Activated naive CD4-positive, alpha-beta T cell treated with anti-CD3 and anti-CD28 coated beads for 36 hours (primary cell): ENCODE measurements at regions of chr10 and their contacts with region 1.

Region 1: DNA sequence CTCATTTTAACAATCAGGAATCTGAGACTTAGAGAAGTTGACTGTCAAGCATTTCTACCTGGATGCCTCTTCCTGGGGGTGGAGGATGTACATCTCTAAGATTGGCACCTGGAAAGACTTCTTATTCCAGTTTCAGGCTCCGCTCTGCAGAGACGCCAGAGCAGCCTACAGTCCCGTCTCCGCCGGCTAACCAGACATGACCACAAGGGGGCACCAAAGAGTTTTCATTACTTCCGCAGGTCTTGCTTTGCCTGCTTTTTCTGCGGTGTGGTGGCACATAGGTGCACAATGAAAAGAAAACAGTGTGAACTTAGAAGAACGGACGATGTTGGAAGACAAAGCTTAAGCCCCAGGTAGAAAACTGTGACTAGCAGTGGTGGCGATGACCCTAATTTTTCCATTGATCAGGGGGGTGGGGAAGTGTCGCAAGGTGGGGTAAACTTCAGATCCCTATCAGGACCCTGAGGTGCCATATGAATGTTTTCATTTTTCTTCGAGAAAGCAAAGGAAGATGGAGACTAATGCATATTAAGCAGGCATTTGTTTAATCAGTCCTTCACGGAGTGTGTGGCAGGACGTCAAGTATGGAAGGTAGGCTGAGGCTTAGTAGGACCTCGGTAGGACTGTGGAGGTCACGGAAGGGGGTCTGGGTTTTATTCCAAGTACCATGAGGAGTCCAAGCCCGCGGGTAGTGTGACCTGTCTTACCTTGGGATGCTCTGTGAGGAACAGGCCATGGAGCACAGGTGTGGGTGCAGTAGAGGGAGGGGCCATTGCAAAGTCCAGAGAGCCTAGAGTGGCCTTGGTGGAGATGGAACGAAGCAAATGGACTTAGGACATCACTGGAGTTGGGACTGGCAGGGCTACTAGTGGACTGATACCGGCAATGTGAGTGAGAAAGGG is 60.1 kb upstream of the SORCS3 start:
- DNase-seq: peak; percentile 84
- H3K4me3 Mint-ChIP-seq: no peak overlapping the region
- H3K27ac Mint-ChIP-seq: no peak overlapping the region
- H3K4me1 Mint-ChIP-seq: peaks cover 9% of the 10 kb centered on the region
- H3K27me3 Mint-ChIP-seq: peaks cover 13% of the 10 kb centered on the region

Region 2: DNA sequence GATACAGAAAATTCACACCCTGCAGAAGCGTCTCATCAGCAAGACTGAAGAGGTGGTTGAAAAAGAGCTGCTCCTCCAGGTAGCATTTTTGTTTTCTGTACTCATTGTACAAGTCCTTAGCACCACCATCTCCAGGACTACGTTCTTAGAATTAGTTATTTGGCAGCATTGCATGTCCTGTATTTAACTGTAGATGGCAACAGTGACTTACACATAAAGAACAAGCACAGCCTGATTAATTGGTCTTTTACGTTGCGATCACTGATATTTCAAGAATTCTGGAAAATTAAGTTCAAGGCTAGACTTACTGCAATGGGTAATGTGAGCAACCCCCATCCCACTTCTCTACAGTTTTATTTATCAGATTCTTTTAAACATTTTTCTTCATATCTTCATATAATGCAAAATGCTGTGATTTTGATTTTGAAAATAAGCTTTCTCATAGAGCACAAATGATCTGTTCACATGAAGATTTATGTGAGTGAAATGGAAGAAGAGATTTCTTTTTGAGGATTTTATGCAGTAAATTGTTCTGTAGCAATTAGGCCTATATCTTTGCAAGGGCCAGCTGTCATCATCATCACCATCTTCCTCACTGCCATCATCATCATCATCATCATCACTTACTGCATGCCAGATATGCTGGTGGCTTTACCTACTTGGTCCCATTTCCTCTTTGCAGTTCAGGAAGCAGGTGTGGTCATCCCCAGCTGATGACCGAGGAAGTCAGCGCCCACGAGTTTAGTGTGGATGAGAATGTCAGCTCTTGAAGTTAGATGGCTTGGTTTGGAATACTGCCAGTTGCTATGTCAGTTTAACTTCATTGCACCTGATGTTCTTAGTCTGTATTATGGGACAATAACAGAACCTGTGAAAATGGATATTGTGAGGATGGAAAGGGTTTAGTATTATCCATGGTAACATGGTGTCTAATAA is 174.0 kb before region 1 on chr10:
- CTCF ChIA-PET with region 1: interaction called, 3 read pairs
- intact Hi-C with region 1: loop called (anchors 5 kb)
- DNase-seq: no peak
- H3K4me3 Mint-ChIP-seq: no peak overlapping the region
- H3K27ac Mint-ChIP-seq: no peak overlapping the region
- H3K4me1 Mint-ChIP-seq: peaks cover 2% of the 10 kb centered on the region
- H3K27me3 Mint-ChIP-seq: peaks cover 12% of the 10 kb centered on the region

Region 3: GRCh38 chr10:104614245-104614831 is 33.3 kb after region 1 on chr10:
- CTCF ChIA-PET with region 1: interaction called, 12 read pairs
- intact Hi-C with region 1: loop called (anchors 1 kb)
- DNase-seq: peak; percentile 55
- H3K4me3 Mint-ChIP-seq: no peak overlapping the region
- H3K27ac Mint-ChIP-seq: no peak overlapping the region
- H3K4me1 Mint-ChIP-seq: no peaks in the 10 kb centered on the region
- H3K27me3 Mint-ChIP-seq: no peaks in the 10 kb centered on the region

Region 4: DNA sequence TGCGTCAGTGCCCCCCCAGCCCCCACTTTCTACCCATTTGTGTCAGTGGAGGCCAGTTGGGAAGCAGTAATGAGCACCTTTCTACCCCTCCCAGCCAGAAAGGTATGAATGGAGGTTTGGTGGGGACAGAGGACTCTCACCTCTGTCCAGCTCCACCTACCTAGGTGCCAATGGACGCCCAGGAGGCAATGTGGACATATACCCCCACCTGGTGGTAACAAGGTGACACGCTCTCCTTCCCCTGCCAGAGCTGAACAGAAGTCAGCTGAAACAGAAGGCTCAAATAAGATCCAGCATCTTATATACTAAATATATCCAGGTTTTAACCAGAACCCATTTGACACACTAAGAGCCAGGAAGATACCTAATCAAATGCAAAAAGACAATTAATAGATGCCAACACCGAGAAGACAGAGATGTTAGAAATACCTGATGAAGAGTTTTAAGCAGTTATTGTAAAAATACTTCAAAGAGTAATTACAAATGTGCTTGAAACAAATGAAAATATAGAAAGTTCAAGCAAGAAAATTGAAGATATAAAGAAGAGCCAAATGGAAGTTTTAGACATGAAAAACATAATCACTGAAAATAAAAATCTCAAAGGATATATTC is 41.7 kb after region 1 on chr10:
- CTCF ChIA-PET with region 1: no interaction called
- intact Hi-C with region 1: loop called (anchors 1 kb)
- DNase-seq: peak; percentile 42
- H3K4me3 Mint-ChIP-seq: no peak overlapping the region
- H3K27ac Mint-ChIP-seq: no peak overlapping the region
- H3K4me1 Mint-ChIP-seq: no peaks in the 10 kb centered on the region
- H3K27me3 Mint-ChIP-seq: peaks cover 20% of the 10 kb centered on the region

Region 5: DNA sequence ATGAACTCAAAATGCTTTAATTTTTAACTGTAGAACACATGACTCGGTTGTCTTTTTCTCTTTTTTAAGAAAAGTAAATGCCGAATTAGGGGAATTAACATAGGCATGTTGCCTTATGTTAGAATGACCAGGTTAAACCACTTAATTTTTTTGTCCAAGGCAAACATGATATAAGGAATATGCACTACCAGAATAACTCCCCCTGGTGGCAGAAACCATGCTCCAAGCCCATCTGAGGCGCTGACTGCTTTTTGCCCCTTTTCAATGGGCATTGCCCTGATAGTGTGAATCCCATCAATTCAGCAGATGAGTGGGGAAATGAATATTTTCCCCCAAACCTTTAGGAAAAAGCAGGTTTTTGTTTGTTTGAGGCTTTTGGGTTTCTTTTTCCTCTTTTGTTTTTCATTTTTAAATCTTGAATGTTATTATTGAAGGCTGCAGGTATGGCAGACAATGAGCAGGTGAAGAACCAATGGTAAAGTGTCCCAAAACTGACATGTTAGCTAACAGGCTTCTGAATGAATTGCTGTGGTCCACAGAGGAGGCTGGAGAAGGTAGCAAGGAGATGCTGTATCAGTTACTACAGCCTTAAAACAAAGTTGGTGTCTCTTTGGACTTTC is 344.3 kb after region 1 on chr10:
- CTCF ChIA-PET with region 1: no interaction called
- intact Hi-C with region 1: loop called (anchors 1 kb)
- DNase-seq: peak; percentile 61
- H3K4me3 Mint-ChIP-seq: no peak overlapping the region
- H3K27ac Mint-ChIP-seq: no peak overlapping the region
- H3K4me1 Mint-ChIP-seq: no peaks in the 10 kb centered on the region
- H3K27me3 Mint-ChIP-seq: no peaks in the 10 kb centered on the region

Region 6: DNA sequence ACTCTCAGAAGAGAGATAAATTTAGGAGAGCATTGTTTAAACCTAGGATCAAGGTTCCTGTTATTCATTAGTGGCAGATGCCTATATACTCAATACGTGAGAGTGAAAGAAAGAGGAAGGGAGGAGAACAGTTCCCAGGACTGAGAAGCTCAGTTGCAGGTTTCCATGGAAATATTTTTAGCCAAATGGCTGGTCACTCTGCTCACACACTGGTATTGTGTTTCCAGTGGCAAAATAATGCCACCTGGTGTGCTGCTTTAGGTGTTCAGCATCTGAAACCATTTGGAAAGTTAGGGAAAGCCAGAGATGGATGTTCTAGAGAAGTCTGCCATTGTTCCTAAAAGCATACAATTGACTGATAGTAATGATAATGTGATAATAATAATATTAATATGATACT is 887.7 kb after region 1 on chr10:
- CTCF ChIA-PET with region 1: no interaction called
- intact Hi-C with region 1: no loop called
- DNase-seq: no peak
- H3K4me3 Mint-ChIP-seq: no peak overlapping the region
- H3K27ac Mint-ChIP-seq: no peak overlapping the region
- H3K4me1 Mint-ChIP-seq: no peaks in the 10 kb centered on the region
- H3K27me3 Mint-ChIP-seq: no peaks in the 10 kb centered on the region

Region 7: GRCh38 chr10:105691811-105692210 is 1110.8 kb after region 1 on chr10:
- CTCF ChIA-PET with region 1: interaction called, 3 read pairs
- intact Hi-C with region 1: loop called (anchors 5 kb)
- DNase-seq: no peak
- H3K4me3 Mint-ChIP-seq: no peak overlapping the region
- H3K27ac Mint-ChIP-seq: no peak overlapping the region
- H3K4me1 Mint-ChIP-seq: no peaks in the 10 kb centered on the region
- H3K27me3 Mint-ChIP-seq: peaks cover 2% of the 10 kb centered on the region

Region 8: DNA sequence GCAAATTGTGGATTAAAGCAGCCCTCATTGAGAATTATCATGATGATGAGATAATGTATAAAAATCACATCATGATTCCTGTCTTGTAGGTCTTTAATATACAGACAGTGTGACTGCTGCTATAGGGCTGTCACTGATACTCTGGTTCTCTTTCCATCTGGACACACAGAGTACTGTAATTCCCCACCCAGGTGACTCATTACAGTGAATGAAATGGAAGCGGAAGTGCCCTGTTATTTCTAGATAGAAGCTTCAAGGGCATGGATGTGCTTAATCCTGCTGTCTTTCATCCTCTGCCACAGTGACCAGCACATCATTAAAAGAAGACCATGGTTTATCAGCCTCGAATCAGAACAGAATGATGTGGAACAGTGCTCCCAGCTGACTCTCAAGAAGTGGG is 1294.0 kb after region 1 on chr10:
- CTCF ChIA-PET with region 1: no interaction called
- intact Hi-C with region 1: no loop called
- DNase-seq: no peak
- H3K4me3 Mint-ChIP-seq: no peak overlapping the region
- H3K27ac Mint-ChIP-seq: no peak overlapping the region
- H3K4me1 Mint-ChIP-seq: peaks cover 3% of the 10 kb centered on the region
- H3K27me3 Mint-ChIP-seq: no peaks in the 10 kb centered on the region